ENCODE measurements at regions of chr11 and their contacts with region 1.

Region 1: GRCh38 chr11:45655347-45655756 is 10.1 kb downstream of the CHST1 start:
- DNase-seq: peak in 29 of 35 experiments; percentile 12 to 69 (median 42)
- ATAC-seq: peak; percentile 53 to 63 (median 56)
- H3K4me3 ChIP-seq: no peak overlapping the region
- H3K4me3 Mint-ChIP-seq: no peak overlapping the region
- H3K27ac ChIP-seq: no peak overlapping the region
- H3K27ac Mint-ChIP-seq: no peak overlapping the region
- H3K4me1 ChIP-seq: peaks cover 0 to 8% of the 10 kb centered on the region in 2 experiments
- H3K4me1 Mint-ChIP-seq: peaks cover 4 to 9% (median 4%) of the 10 kb centered on the region in 3 donors
- H3K27me3 ChIP-seq: peaks cover 5 to 63% of the 10 kb centered on the region in 2 experiments
- H3K27me3 Mint-ChIP-seq: peaks cover 44% of the 10 kb centered on the region in 2 donors

Region 2: GRCh38 chr11:45371251-45372115 is 283.9 kb before region 1 on chr11:
- CTCF ChIA-PET with region 1: interaction called, 4 to 12 read pairs
- POLR2A ChIA-PET with region 1: no interaction called
- DNase-seq: peak in 33 of 35 experiments; percentile 19 to 81 (median 43)
- ATAC-seq: peak; percentile 45 to 62 (median 57)
- H3K4me3 ChIP-seq: peak overlapping the region; percentile 18 to 26
- H3K4me3 Mint-ChIP-seq: peak overlapping the region in 1 of 3 donors; percentile 53
- H3K27ac ChIP-seq: no peak overlapping the region
- H3K27ac Mint-ChIP-seq: no peak overlapping the region
- H3K4me1 ChIP-seq: peaks cover 8 to 30% of the 10 kb centered on the region in 2 experiments
- H3K4me1 Mint-ChIP-seq: peaks cover 26 to 34% (median 31%) of the 10 kb centered on the region in 3 donors
- H3K27me3 ChIP-seq: peaks cover 0 to 40% of the 10 kb centered on the region in 2 experiments
- H3K27me3 Mint-ChIP-seq: peaks cover 27 to 29% of the 10 kb centered on the region in 2 donors

Region 3: GRCh38 chr11:45607995-45608394 is 47.4 kb before region 1 on chr11:
- CTCF ChIA-PET with region 1: no interaction called
- POLR2A ChIA-PET with region 1: no interaction called
- DNase-seq: no peak
- ATAC-seq: no peak
- H3K4me3 ChIP-seq: no peak overlapping the region
- H3K4me3 Mint-ChIP-seq: no peak overlapping the region
- H3K27ac ChIP-seq: no peak overlapping the region
- H3K27ac Mint-ChIP-seq: no peak overlapping the region
- H3K4me1 ChIP-seq: no peaks in the 10 kb centered on the region
- H3K4me1 Mint-ChIP-seq: no peaks in the 10 kb centered on the region
- H3K27me3 ChIP-seq: peaks cover 0 to 48% of the 10 kb centered on the region in 2 experiments
- H3K27me3 Mint-ChIP-seq: peaks cover 46 to 53% of the 10 kb centered on the region in 2 donors

Measured in T-cell (primary cell).